CD8-positive, alpha-beta T cell (primary cell): ENCODE measurements at regions of chr6 and their contacts with region 1.

Region 1: DNA sequence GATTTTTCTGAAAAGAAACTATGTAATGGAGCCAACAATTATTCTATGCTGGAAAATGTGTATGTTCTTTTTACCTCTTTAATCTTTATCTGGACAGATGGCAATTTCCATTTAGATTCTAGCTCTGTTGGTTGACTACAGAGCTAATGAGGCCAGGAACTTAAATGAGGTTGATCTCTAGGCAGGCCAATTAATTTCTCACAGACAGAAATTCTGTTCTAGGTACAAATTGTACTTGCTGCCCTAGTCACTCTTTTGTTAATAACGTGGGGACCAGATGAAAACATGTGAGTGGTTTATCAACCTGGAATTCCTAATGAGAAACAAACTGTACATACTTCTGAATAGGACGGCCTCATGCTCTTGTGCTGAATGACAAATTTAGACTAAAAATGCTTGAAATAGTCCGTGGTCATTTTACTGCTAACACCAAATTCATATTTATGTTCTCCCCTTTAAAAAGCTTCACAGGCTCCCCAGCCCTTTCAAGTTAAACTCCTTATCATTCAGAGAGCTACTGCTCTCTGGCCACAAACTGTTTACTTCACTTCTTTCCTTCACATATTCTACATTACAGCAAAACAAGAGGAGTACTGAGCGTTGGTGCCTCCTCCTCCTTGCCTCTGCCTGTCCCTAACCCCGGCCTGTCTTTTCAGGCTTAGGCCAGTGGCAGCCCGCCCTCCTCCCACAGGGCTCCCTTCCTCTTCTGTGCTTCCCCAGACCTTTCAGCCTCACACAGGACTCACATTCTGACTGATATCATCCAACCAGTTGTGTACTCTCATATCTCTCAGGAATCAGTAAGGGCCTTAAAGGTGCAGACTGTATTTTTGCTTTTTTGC is 41.4 kb downstream of the DTNBP1 start:
- DNase-seq: peak in 1 of 9 experiments; percentile 12
- ATAC-seq: no peak
- H3K4me3 ChIP-seq: no peak overlapping the region
- H3K4me3 Mint-ChIP-seq: no peak overlapping the region
- H3K27ac ChIP-seq: no peak overlapping the region
- H3K27ac Mint-ChIP-seq: no peak overlapping the region
- H3K4me1 ChIP-seq: peaks cover 11% of the 10 kb centered on the region
- H3K4me1 Mint-ChIP-seq: peaks cover 47% of the 10 kb centered on the region
- H3K27me3 ChIP-seq: no peaks in the 10 kb centered on the region
- H3K27me3 Mint-ChIP-seq: no peaks in the 10 kb centered on the region
- CTCF ChIP-seq: no peak

Region 2: DNA sequence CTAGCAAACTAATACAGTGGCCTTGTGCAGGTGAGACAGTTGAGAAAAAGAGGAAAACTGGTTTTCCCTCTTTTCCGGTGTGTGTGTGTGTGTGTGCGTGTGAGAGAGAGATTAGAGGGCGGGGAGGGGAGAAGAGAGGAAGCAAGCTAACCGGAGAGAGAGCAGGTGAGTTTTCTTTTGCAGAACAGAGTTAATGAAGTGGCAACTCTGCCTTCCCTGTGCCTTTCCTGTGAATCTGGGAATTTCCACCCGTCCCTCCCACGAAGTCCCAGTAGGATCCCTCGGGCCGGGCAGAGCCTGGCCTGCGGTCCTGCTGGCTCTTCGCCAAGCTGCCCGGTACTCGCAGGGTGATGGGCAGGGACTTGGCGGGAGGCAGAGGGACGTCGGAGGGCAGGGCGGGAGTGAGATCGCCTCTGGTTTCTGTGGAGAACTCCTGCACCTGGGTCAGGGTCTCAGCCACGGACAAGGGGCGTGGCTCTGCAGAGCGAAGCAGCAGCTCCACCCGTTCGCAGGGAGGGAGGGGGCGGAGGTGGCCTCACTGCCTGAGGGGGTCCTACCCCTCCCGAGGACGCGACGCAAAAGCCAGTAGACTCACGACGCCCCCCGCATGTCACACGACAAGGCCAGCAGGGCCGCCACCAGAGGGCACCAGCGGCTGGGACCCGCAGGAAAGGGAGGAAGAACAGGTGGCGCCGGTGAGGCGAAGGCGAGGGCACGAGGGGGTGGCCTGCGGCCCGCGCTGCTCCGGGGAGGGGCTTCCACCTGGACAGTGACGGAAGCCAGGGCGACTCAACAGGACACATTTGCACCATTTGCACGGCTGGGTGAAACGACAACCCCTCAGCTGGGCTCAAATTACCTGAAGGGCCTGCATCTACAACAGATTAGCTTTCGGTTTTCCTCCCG is 1747.9 kb before region 1 on chr6:
- CTCF ChIA-PET with region 1: no interaction called
- POLR2A ChIA-PET with region 1: no interaction called
- intact Hi-C with region 1: loop called in 1 of 2 experiments (anchors 5 kb)
- DNase-seq: peak; percentile 47 to 84 (median 77)
- ATAC-seq: peak; percentile 93
- H3K4me3 ChIP-seq: peak overlapping the region; percentile 40 to 44
- H3K4me3 Mint-ChIP-seq: peak overlapping the region; percentile 83
- H3K27ac ChIP-seq: no peak overlapping the region
- H3K27ac Mint-ChIP-seq: no peak overlapping the region
- H3K4me1 ChIP-seq: peaks cover 7% of the 10 kb centered on the region
- H3K4me1 Mint-ChIP-seq: peaks cover 15% of the 10 kb centered on the region
- H3K27me3 ChIP-seq: no peaks in the 10 kb centered on the region
- H3K27me3 Mint-ChIP-seq: peaks cover under 1% of the 10 kb centered on the region
- CTCF ChIP-seq: peak; percentile 67

Region 3: GRCh38 chr6:14129575-14129974 is 1491.8 kb before region 1 on chr6:
- CTCF ChIA-PET with region 1: interaction called, 8 read pairs
- POLR2A ChIA-PET with region 1: no interaction called
- intact Hi-C with region 1: loop called in 1 of 2 experiments (anchors 2 kb)
- DNase-seq: peak in 7 of 9 experiments; percentile 11 to 66 (median 38)
- ATAC-seq: peak; percentile 55
- H3K4me3 ChIP-seq: no peak overlapping the region
- H3K4me3 Mint-ChIP-seq: no peak overlapping the region
- H3K27ac ChIP-seq: no peak overlapping the region
- H3K27ac Mint-ChIP-seq: no peak overlapping the region
- H3K4me1 ChIP-seq: no peaks in the 10 kb centered on the region
- H3K4me1 Mint-ChIP-seq: peaks cover 11% of the 10 kb centered on the region
- H3K27me3 ChIP-seq: no peaks in the 10 kb centered on the region
- H3K27me3 Mint-ChIP-seq: no peaks in the 10 kb centered on the region
- CTCF ChIP-seq: no peak

Region 4: GRCh38 chr6:15864038-15864707 is 242.7 kb after region 1 on chr6:
- CTCF ChIA-PET with region 1: no interaction called
- POLR2A ChIA-PET with region 1: no interaction called
- intact Hi-C with region 1: no loop called
- DNase-seq: no peak
- ATAC-seq: no peak
- H3K4me3 ChIP-seq: no peak overlapping the region
- H3K4me3 Mint-ChIP-seq: no peak overlapping the region
- H3K27ac ChIP-seq: no peak overlapping the region
- H3K27ac Mint-ChIP-seq: no peak overlapping the region
- H3K4me1 ChIP-seq: no peaks in the 10 kb centered on the region
- H3K4me1 Mint-ChIP-seq: no peaks in the 10 kb centered on the region
- H3K27me3 ChIP-seq: no peaks in the 10 kb centered on the region
- H3K27me3 Mint-ChIP-seq: peaks cover 2% of the 10 kb centered on the region
- CTCF ChIP-seq: no peak